Psoas muscle (tissue), 8 donors: ENCODE measurements at regions of chr20 and their contacts with region 1.

Region 1: GRCh38 chr20:49078296-49078695 is 32.2 kb downstream of the CSE1L start:
- DNase-seq: no peak
- ATAC-seq: no peak
- H3K4me3 ChIP-seq: no peak overlapping the region
- H3K27ac ChIP-seq: no peak overlapping the region
- H3K4me1 ChIP-seq: no peaks in the 10 kb centered on the region
- H3K27me3 ChIP-seq: no peaks in the 10 kb centered on the region
- CTCF ChIP-seq: no peak

Region 2: GRCh38 chr20:49024220-49024619 is 54.1 kb before region 1 on chr20:
- intact Hi-C with region 1: loop called (anchors 5 to 10 kb)
- DNase-seq: no peak
- ATAC-seq: no peak
- H3K4me3 ChIP-seq: no peak overlapping the region
- H3K27ac ChIP-seq: no peak overlapping the region
- H3K4me1 ChIP-seq: no peaks in the 10 kb centered on the region
- H3K27me3 ChIP-seq: no peaks in the 10 kb centered on the region
- CTCF ChIP-seq: no peak

Region 3: DNA sequence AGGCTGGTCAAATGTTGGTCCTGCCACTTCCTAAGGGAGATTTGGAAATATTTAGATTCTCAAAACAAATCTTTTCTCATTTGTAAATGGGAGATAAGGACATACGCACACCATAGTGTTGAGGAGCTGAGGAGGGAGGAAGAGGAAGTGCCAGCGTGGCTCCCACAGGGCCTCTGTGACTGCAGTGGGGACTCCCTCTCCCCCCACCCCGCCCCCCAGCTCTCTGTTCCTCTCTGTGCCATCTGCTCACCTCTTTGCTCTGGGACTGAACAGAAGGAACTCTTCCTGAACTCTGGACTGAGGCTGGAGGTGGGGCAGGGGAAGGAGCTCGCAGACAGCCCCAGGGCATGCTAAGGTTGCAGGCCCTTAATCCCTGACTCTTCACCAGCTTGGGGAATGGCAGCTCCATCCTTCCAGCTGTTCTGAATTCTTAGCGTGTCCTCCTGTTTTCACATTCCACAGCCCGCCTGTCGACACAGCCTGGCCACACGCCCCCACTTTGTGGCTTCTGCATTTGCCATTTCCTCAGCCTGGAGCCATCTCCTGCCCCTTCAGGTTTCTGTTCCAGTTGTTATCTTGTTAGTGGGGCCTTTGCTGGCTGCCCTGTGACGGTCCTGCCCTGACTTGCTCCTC is 152.4 kb after region 1 on chr20:
- intact Hi-C with region 1: no loop called
- DNase-seq: peak in 1 of 2 donors; percentile 40
- ATAC-seq: peak in 3 of 4 donors; percentile 29 to 83 (median 80)
- H3K4me3 ChIP-seq: no peak overlapping the region
- H3K27ac ChIP-seq: no peak overlapping the region
- H3K4me1 ChIP-seq: no peaks in the 10 kb centered on the region
- H3K27me3 ChIP-seq: no peaks in the 10 kb centered on the region
- CTCF ChIP-seq: no peak